ENCODE measurements at regions of chr9 and their contacts with region 1.

Region 1: GRCh38 chr9:136493567-136493971 is 10.7 kb upstream of the SEC16A start:
- DNase-seq: no peak
- ATAC-seq: peak; percentile 32

Region 2: GRCh38 chr9:136527721-136528691 is 34.4 kb after region 1 on chr9:
- intact Hi-C with region 1: no loop called
- DNase-seq: no peak
- ATAC-seq: no peak

Region 3: GRCh38 chr9:136545966-136546698 is 52.6 kb after region 1 on chr9 and contains the start of gene NOTCH1:
- intact Hi-C with region 1: loop called (anchors 10 kb)
- DNase-seq: peak; percentile 94
- ATAC-seq: peak; percentile 72
- total RNA-seq, gene NOTCH1: 84.2 TPM

Measured in sciatic nerve (tissue), 2 donors.